ENCODE measurements at regions of chr7 and their contacts with region 1.

Region 1: DNA sequence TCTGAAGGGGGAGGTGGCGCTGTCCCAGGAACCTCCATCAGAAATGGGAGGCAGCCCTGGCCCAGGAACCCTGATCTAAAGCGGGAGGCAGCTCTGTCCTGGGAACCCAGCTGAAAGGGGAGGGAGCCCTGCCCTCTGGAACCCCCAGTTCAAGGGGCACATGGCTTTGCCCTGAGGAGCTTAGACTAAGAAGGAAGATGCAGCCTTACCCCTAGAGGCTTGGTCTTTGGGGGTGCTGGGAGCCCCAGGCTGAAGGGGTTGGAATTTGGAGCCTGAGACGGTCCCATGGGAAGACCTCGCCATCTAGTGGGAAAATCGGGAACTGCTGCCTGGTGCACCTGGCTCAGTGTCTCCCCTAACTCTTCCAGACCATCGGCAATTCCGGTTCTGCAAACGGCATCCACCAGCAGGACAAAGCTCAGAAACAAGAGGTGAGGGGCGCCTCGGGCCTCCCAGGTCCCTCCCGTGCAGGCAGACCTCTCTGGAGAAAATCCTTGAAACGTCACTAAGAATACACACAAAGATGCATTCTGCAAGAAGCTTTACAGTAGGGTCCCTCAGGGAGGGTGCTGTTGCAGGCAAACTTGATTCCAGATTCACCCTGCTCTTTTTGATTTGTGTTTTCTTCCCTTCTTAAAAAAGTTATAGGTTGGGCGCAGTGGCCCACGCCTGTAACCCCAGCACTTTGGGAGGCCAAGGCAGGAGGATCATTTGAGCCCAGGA is 52.4 kb upstream of the GTF2IRD1 start:
- DNase-seq: peak; percentile 47
- H3K4me3 Mint-ChIP-seq: no peak overlapping the region
- H3K27ac Mint-ChIP-seq: no peak overlapping the region
- H3K4me1 Mint-ChIP-seq: no peaks in the 10 kb centered on the region
- H3K27me3 Mint-ChIP-seq: no peaks in the 10 kb centered on the region

Region 2: GRCh38 chr7:74206589-74207120 is 194.6 kb before region 1 on chr7:
- intact Hi-C with region 1: loop called (anchors 1 kb)
- DNase-seq: peak; percentile 72
- H3K4me3 Mint-ChIP-seq: peak overlapping the region; percentile 49
- H3K27ac Mint-ChIP-seq: no peak overlapping the region
- H3K4me1 Mint-ChIP-seq: peaks cover 23% of the 10 kb centered on the region
- H3K27me3 Mint-ChIP-seq: no peaks in the 10 kb centered on the region

Measured in activated T-helper 1 cell treated with anti-CD3 and anti-CD28 coated beads, Interleukin-12 subunit alpha, Interleukin-12 subunit beta, Interleukin-2, Interleukin-4 antibody, amounts not matched to agents 30 ng/mL and 10 ng/mL and 1 ng/mL, durations not matched to agents 14 hours and 24 hours and 36 hours (primary cell).